Tibial artery (tissue), 4 donors: ENCODE measurements at regions of chr20 and their contacts with region 1.

Region 1: GRCh38 chr20:36573103-36573794 is at the start of gene TGIF2:
- DNase-seq: peak; percentile 70 to 92
- H3K4me3 ChIP-seq: peak within 1 kb of the TSS; percentile 80 to 90
- H3K27ac ChIP-seq: peak within 1 kb of the TSS; percentile 88 to 91
- H3K4me1 ChIP-seq: peaks cover 0 to 29% (median 20%) of the 10 kb centered on the region in 4 donors
- H3K27me3 ChIP-seq: no peaks in the 10 kb centered on the region
- CTCF ChIP-seq: no peak

Region 2: DNA sequence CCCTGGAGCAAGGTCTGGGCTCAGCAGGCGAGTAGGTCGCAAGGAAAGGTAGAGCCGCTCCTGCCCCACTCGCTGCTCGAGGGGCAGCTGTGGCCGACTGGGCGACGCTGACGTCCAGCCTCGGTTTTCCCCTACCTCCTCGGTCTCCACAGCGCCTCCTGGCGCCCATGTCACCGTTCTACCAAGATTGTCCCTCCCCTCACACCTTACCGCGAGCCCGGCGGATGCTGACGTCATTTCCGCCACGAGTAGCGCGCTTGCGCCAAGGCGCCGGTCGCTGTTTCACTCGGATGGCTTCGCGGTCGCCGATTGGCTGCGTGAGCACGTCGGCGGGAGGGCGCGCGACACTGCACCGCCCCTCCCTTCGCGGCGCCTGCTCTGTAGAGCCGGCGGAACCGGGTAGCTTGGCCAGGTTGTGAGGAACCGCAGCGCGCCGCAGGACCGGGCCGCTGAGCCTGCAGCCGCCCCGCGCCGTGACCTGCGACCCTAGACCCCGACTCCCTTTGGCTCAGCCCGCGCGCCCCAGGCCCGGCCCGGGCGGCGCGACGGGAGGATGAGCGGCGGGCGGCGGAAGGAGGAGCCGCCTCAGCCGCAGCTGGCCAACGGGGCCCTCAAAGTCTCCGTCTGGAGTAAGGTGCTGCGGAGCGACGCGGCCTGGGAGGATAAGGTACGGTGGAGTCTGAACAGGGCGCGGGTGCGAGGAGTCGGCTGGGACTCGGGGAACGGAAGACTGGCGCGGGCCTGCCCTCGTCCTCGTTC is 32.3 kb after region 1 on chr20 and contains the start of gene RAB5IF:
- intact Hi-C with region 1: loop called (anchors 2 kb)
- DNase-seq: peak; percentile 98 to 99
- H3K4me3 ChIP-seq: peak within 1 kb of the TSS; percentile 75 to 99
- H3K27ac ChIP-seq: peak within 1 kb of the TSS; percentile 76 to 77
- H3K4me1 ChIP-seq: peaks cover 0 to 24% (median 18%) of the 10 kb centered on the region in 4 donors
- H3K27me3 ChIP-seq: no peaks in the 10 kb centered on the region
- CTCF ChIP-seq: peak; percentile 85 to 94

Region 3: GRCh38 chr20:36754656-36755222 is 181.5 kb after region 1 on chr20:
- intact Hi-C with region 1: loop called (anchors 10 kb)
- DNase-seq: no peak
- H3K4me3 ChIP-seq: no peak overlapping the region
- H3K27ac ChIP-seq: no peak overlapping the region
- H3K4me1 ChIP-seq: no peaks in the 10 kb centered on the region
- H3K27me3 ChIP-seq: no peaks in the 10 kb centered on the region
- CTCF ChIP-seq: peak; percentile 84 to 85